ENCODE measurements at regions of chr16 and their contacts with region 1.

Region 1: GRCh38 chr16:11851294-11852091 is at the start of gene RSL1D1:
- DNase-seq: peak; percentile 89 to 98 (median 93)
- ATAC-seq: peak; percentile 79
- H3K4me3 ChIP-seq: peak within 1 kb of the TSS; percentile 99
- H3K4me3 Mint-ChIP-seq: peak within 1 kb of the TSS; percentile 93
- H3K27ac ChIP-seq: peak within 1 kb of the TSS; percentile 92 to 95
- H3K27ac Mint-ChIP-seq: peak within 1 kb of the TSS; percentile 96
- H3K4me1 ChIP-seq: peaks cover 48% of the 10 kb centered on the region
- H3K4me1 Mint-ChIP-seq: peaks cover 57% of the 10 kb centered on the region
- H3K27me3 ChIP-seq: no peaks in the 10 kb centered on the region
- H3K27me3 Mint-ChIP-seq: no peaks in the 10 kb centered on the region
- CTCF ChIP-seq: no peak
- total RNA-seq, gene RSL1D1: 235 to 242 TPM

Region 2: DNA sequence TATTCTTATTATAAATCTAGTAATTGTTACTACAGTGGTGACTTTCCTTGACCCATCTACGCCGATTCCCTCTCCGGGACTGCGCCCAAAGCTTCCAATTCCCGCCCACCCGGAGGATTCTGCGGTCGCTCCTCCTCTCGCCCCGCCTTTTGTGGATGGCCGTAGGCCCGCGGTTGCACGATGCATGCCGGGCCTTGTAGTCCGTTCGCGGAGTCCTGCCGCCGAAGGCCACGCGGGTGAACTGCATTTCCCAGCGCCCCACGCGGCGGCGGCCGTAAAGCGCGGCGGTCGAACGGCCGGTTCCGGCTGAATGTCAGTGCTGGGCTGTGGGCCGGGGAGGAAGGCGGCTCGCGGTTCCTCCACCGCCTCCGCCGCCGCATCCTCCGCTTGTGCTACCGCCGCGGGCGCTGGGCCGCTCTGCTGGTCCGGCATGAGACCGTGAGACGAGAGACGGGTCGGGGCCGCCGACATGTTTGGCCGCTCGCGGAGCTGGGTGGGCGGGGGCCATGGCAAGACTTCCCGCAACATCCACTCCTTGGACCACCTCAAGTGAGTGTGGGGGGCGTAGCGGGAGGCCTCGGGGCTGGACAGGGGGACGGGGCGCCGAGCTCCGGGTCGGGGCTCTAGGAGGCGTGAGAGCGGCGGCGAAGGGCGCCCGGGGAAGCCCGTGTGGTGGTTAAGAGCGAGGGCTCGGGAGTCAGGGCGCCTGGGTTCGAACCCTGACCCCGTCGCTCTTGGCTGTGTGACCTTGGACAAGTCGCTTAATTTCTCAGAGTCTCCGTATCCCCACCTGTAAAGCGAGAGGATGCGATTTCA is 907.0 kb before region 1 on chr16 and contains the start of gene CLEC16A:
- CTCF ChIA-PET with region 1: no interaction called
- POLR2A ChIA-PET with region 1: no interaction called
- intact Hi-C with region 1: loop called (anchors 1 to 10 kb)
- DNase-seq: peak; percentile 91 to 98 (median 93)
- ATAC-seq: peak; percentile 70
- H3K4me3 ChIP-seq: peak within 1 kb of the TSS; percentile 66 to 76
- H3K4me3 Mint-ChIP-seq: peak within 1 kb of the TSS; percentile 93
- H3K27ac ChIP-seq: peak within 1 kb of the TSS; percentile 38 to 65
- H3K27ac Mint-ChIP-seq: peak within 1 kb of the TSS; percentile 82
- H3K4me1 ChIP-seq: peaks cover 60% of the 10 kb centered on the region
- H3K4me1 Mint-ChIP-seq: peaks cover 71% of the 10 kb centered on the region
- H3K27me3 ChIP-seq: no peaks in the 10 kb centered on the region
- H3K27me3 Mint-ChIP-seq: no peaks in the 10 kb centered on the region
- CTCF ChIP-seq: no peak
- total RNA-seq, gene CLEC16A: 20.5 to 21.9 TPM

Region 3: DNA sequence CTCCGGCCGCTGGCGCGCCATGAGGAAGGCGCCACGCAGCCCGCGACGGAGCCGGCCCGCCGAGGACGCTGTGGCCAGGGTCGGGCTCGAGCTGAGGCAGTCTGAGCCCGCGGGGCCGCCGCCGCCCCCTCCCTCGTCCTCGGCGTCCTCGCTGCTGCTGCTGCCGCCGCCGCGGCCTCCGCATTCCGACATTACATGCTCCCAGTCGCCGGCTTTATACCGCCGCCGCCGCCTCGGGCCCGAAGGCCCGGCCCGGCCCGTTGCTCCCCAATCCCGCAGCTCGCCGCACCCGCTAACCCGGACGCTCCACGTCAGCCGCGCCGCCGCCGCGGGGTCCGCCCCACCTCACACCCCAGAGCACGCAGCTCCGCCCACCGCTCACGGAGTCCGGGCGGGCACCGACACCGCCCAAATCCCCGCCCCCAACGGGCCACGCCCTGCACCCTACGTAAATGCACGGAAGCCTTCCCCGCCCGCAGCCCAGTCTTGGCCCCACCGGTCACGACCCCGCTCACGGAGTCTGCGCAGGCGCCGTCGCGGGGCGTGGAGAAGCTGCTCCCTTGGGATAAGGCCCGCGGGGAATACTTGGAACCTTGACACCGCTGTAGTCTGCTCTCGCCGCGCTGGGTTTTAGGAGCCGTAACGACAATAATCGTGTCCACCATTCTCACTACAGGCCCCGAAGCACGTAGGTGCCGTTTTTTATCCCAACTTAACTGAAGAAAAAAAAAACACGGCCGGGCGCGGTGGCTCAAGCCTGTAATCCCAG is 108.8 kb before region 1 on chr16 and contains the start of gene TXNDC11:
- CTCF ChIA-PET with region 1: interaction called, 4 read pairs
- POLR2A ChIA-PET with region 1: no interaction called
- intact Hi-C with region 1: loop called (anchors 1 kb)
- DNase-seq: peak; percentile 99 to 100 (median 99)
- ATAC-seq: peak; percentile 96
- H3K4me3 ChIP-seq: peak within 1 kb of the TSS; percentile 63 to 78
- H3K4me3 Mint-ChIP-seq: peak within 1 kb of the TSS; percentile 95
- H3K27ac ChIP-seq: peak within 1 kb of the TSS; percentile 79 to 95
- H3K27ac Mint-ChIP-seq: peak within 1 kb of the TSS; percentile 98
- H3K4me1 ChIP-seq: peaks cover 30% of the 10 kb centered on the region
- H3K4me1 Mint-ChIP-seq: peaks cover 48% of the 10 kb centered on the region
- H3K27me3 ChIP-seq: no peaks in the 10 kb centered on the region
- H3K27me3 Mint-ChIP-seq: no peaks in the 10 kb centered on the region
- CTCF ChIP-seq: no peak
- total RNA-seq, gene TXNDC11: 118 to 130 TPM

Region 4: DNA sequence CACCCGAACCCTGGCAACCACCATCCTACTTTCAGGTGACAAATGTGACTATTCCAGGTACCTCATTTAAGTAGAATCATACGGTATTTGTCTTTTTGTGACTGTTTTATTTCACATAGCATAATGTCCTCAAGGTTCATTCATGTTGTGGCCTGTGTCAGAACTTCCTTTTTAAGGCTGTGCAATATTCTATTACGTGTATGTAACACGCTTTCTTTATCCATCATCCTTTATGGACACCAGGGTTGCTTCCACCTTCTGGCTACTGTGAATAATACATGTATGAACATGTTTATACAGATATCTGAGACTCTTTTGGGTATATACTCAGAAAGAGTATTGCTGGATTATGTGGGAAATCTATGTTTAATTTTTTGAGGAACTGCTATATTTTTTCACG is 28.5 kb after region 1 on chr16:
- CTCF ChIA-PET with region 1: no interaction called
- POLR2A ChIA-PET with region 1: no interaction called
- intact Hi-C with region 1: no loop called
- DNase-seq: no peak
- ATAC-seq: no peak
- H3K4me3 ChIP-seq: no peak overlapping the region
- H3K4me3 Mint-ChIP-seq: no peak overlapping the region
- H3K27ac ChIP-seq: no peak overlapping the region
- H3K27ac Mint-ChIP-seq: no peak overlapping the region
- H3K4me1 ChIP-seq: no peaks in the 10 kb centered on the region
- H3K4me1 Mint-ChIP-seq: no peaks in the 10 kb centered on the region
- H3K27me3 ChIP-seq: no peaks in the 10 kb centered on the region
- H3K27me3 Mint-ChIP-seq: no peaks in the 10 kb centered on the region
- CTCF ChIP-seq: no peak

Region 5: DNA sequence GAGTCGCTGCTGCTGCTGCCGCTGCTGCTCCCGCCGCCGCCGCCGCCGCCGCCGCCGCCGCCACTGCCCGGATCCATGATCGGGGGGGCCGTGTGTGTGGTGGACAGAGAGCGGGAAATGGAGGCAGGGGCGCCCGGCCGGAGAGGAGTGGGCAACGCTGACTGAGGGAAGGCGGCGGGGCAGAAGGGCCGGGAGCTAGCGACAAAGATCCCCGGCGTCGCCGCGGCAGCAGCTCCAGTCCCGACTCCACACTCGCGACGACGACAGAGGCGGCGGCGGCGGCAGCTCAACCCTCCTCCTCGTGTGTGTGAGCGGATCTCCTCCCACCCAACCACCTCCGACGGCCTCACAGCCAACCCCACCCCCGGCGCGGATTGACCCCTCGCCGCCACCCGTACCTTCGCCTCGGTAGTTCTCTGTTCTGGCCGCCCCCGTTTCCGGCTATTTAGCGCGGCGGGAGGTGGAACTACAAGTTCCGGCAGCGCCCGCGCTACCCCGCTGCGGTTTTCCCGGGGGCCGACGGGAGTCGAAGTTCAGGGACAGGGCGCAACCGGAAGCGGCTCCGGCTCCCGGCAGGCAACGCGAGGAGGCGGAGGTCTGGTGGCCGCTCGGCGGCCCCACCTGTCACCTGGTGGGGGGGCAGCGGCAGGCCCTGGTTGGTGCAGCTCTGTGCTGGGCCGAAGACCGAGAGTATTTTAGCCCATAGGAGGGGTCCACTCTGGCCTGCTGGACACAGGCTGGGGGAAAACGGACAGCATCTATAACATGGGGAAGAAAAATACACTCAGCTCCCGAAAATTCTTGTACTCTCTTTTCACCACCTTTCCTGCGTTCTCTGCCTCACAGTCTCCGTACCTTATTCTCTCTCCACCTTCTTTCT is 64.4 kb after region 1 on chr16 and contains the start of gene GSPT1:
- CTCF ChIA-PET with region 1: no interaction called
- POLR2A ChIA-PET with region 1: interaction called, 3 read pairs
- intact Hi-C with region 1: loop called (anchors 1 kb)
- DNase-seq: peak; percentile 98 to 100 (median 99)
- ATAC-seq: peak; percentile 89
- H3K4me3 ChIP-seq: peak within 1 kb of the TSS; percentile 52 to 68
- H3K4me3 Mint-ChIP-seq: peak within 1 kb of the TSS; percentile 94
- H3K27ac ChIP-seq: peak within 1 kb of the TSS; percentile 68 to 75
- H3K27ac Mint-ChIP-seq: peak within 1 kb of the TSS; percentile 98
- H3K4me1 ChIP-seq: peaks cover 24% of the 10 kb centered on the region
- H3K4me1 Mint-ChIP-seq: peaks cover 29% of the 10 kb centered on the region
- H3K27me3 ChIP-seq: no peaks in the 10 kb centered on the region
- H3K27me3 Mint-ChIP-seq: no peaks in the 10 kb centered on the region
- CTCF ChIP-seq: no peak
- total RNA-seq, gene GSPT1: 296 to 297 TPM

Region 6: DNA sequence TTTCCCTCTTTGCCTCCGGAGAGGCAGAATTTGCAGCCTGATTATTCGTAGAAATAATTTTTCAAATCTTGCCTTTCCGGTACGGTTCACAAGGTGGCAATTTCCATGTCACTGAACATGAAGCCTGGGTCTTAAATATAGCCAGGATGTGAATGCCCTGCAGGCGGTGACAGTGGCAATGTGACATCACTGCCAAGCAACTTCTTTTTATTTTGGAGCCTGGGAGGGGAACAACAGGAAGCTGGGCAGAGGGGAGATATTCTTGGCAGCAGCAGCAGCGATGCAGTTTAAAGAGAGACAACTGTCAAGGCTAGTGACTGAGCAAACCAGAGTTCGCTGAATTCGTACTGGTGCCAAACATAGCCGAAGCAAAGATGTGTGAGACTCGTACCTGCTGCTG is 296.2 kb after region 1 on chr16:
- CTCF ChIA-PET with region 1: no interaction called
- POLR2A ChIA-PET with region 1: no interaction called
- intact Hi-C with region 1: no loop called
- DNase-seq: peak in 2 of 9 experiments; percentile 46 to 48
- ATAC-seq: peak; percentile 71
- H3K4me3 ChIP-seq: no peak overlapping the region
- H3K4me3 Mint-ChIP-seq: peak overlapping the region; percentile 37
- H3K27ac ChIP-seq: no peak overlapping the region
- H3K27ac Mint-ChIP-seq: peak overlapping the region; percentile 68
- H3K4me1 ChIP-seq: peaks cover 15% of the 10 kb centered on the region
- H3K4me1 Mint-ChIP-seq: peaks cover 45% of the 10 kb centered on the region
- H3K27me3 ChIP-seq: no peaks in the 10 kb centered on the region
- H3K27me3 Mint-ChIP-seq: no peaks in the 10 kb centered on the region
- CTCF ChIP-seq: no peak

Region 7: GRCh38 chr16:12803203-12804097 is 952.0 kb after region 1 on chr16 and contains the start of gene CPPED1:
- CTCF ChIA-PET with region 1: no interaction called
- POLR2A ChIA-PET with region 1: no interaction called
- intact Hi-C with region 1: loop called in 1 of 2 experiments (anchors 5 kb)
- DNase-seq: peak; percentile 83 to 95 (median 88)
- ATAC-seq: peak; percentile 94
- H3K4me3 ChIP-seq: peak within 1 kb of the TSS; percentile 71 to 86
- H3K4me3 Mint-ChIP-seq: peak within 1 kb of the TSS; percentile 88
- H3K27ac ChIP-seq: peak within 1 kb of the TSS; percentile 55 to 87
- H3K27ac Mint-ChIP-seq: peak within 1 kb of the TSS; percentile 92
- H3K4me1 ChIP-seq: peaks cover 9% of the 10 kb centered on the region
- H3K4me1 Mint-ChIP-seq: peaks cover 22% of the 10 kb centered on the region
- H3K27me3 ChIP-seq: no peaks in the 10 kb centered on the region
- H3K27me3 Mint-ChIP-seq: peaks cover 3% of the 10 kb centered on the region
- CTCF ChIP-seq: no peak
- total RNA-seq, gene CPPED1: 0.89 to 1.1 TPM

Measured in CD8-positive, alpha-beta T cell (primary cell).